ENCODE measurements at regions of chr7 and their contacts with region 1.

Region 1: DNA sequence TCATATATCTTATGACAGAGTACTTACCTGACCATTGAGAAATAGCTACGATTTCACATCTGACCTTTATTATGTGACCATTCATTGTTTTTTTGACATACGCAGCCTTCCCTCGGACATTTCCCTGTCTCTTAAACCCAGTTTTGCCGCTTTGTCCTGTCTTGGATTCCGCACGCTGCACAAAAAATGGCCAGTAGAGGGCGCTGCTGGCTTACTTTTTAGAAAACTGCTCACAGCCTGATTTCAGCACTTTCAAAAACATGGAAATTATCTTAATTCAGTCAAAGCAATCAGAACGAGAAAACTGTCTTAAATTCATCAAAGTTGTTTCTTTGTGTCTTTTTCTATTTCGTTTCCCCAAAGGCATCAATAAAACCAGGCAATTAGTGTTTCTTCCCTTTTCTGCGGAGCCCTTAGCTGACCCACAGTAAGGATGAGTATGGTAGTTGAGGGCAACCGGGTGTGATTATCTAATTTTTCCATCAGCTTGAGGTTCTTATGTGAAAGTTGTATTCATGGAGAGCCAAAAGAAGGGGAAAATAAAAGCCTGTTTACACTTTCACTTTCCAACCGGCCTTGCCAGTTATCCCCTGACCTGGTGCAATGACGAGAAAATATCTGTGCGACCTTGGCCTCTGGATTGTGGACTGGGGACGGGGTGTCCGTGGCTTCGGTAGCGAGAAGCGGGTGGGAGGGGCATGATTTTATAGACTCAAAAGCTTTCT is 144.4 kb downstream of the DYNC1I1 start:
- DNase-seq: peak; percentile 45 to 60
- ATAC-seq: peak; percentile 76 to 94; a peak in 5 of 6 replicates
- H3K4me3 ChIP-seq: no peak overlapping the region
- H3K27ac ChIP-seq: no peak overlapping the region
- H3K4me1 ChIP-seq: no peaks in the 10 kb centered on the region
- CTCF ChIP-seq: peak; percentile 95
- EP300 ChIP-seq: no peak
- POLR2A ChIP-seq: no peak
- RAD21 ChIP-seq: peak; percentile 91

Region 2: GRCh38 chr7:95758187-95758586 is 158.5 kb before region 1 on chr7:
- CTCF ChIA-PET with region 1: no interaction called
- POLR2A ChIA-PET with region 1: no interaction called
- DNase-seq: no peak
- ATAC-seq: no peak
- H3K4me3 ChIP-seq: no peak overlapping the region
- H3K27ac ChIP-seq: no peak overlapping the region
- H3K4me1 ChIP-seq: no peaks in the 10 kb centered on the region
- CTCF ChIP-seq: no peak
- EP300 ChIP-seq: no peak
- POLR2A ChIP-seq: no peak
- RAD21 ChIP-seq: no peak

Region 3: GRCh38 chr7:95899919-95900513 is 16.7 kb before region 1 on chr7:
- CTCF ChIA-PET with region 1: interaction called, 22 read pairs
- POLR2A ChIA-PET with region 1: no interaction called
- DNase-seq: peak in 1 of 2 experiments; percentile 14
- ATAC-seq: peak; percentile 47 to 67; a peak in 4 of 6 replicates
- H3K4me3 ChIP-seq: no peak overlapping the region
- H3K27ac ChIP-seq: no peak overlapping the region
- H3K4me1 ChIP-seq: no peaks in the 10 kb centered on the region
- CTCF ChIP-seq: no peak
- EP300 ChIP-seq: no peak
- POLR2A ChIP-seq: no peak
- RAD21 ChIP-seq: no peak

Region 4: DNA sequence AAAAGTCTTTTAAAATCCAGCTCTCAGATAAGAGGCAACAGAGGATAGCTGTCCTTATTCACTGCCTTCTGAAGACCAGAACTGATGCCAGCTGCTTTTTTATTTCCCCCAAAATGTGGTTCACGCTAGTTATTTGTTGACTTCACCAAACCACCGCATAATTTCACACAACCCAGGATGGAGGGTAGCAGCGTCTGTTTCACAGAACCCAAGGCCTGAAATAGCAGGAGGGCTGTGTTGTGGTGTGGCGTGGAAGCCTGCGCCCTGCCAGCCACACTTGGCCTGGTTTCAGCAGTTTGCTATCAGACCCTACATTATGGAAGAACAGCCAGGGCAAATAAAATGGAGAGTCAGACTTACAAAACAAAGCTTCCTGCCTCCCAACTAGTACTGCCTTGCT is 11.0 kb after region 1 on chr7:
- CTCF ChIA-PET with region 1: interaction called, 26 read pairs
- POLR2A ChIA-PET with region 1: no interaction called
- DNase-seq: no peak
- ATAC-seq: no peak
- H3K4me3 ChIP-seq: no peak overlapping the region
- H3K27ac ChIP-seq: no peak overlapping the region
- H3K4me1 ChIP-seq: no peaks in the 10 kb centered on the region
- CTCF ChIP-seq: no peak
- EP300 ChIP-seq: no peak
- POLR2A ChIP-seq: no peak
- RAD21 ChIP-seq: no peak

Region 5: GRCh38 chr7:96017877-96018276 is 101.1 kb after region 1 on chr7:
- CTCF ChIA-PET with region 1: no interaction called
- POLR2A ChIA-PET with region 1: no interaction called
- DNase-seq: no peak
- ATAC-seq: no peak
- H3K4me3 ChIP-seq: no peak overlapping the region
- H3K27ac ChIP-seq: no peak overlapping the region
- H3K4me1 ChIP-seq: no peaks in the 10 kb centered on the region
- CTCF ChIP-seq: no peak
- EP300 ChIP-seq: no peak
- POLR2A ChIP-seq: no peak
- RAD21 ChIP-seq: no peak

Region 6: DNA sequence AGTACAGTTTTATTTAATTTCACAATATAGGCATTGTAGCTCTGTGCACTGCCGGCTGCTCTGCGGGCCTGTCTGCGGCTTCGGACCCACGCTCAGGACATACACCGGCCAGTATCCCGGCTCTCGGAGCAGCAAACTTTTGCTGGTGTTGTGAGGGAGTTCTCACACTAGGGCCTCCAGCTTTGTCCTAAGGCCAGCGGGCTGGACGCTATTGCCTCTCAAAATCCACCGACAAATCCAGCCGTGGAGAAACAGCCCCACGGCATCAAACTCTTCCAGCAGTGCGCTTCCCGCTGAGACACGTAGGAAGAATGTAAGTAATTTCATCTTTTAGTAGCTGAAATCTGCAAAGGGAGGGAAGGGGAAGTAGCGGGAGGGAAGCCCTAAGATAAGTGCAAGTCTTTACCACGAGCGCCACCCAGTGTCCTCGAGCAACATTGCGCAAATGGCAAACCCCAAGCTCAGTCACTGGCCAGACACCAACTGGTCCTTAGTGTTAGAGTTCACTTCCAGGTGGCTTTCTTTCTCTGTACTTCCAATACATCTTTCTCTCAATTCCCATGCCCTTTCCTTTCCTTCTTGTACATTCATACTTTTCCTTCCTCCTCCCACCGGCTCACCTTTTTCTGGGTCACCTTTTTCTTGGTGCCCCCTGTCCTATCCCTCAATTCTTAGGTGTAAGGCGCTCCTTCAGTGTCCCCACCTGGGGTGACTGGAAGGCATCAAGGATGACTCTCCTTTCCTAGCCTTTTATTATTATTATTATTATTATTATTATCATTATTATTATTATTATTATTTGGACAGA is 1110.9 kb after region 1 on chr7:
- CTCF ChIA-PET with region 1: interaction called, 51 read pairs
- POLR2A ChIA-PET with region 1: no interaction called
- DNase-seq: peak; percentile 55 to 73
- ATAC-seq: peak; percentile 81 to 91
- H3K4me3 ChIP-seq: peak overlapping the region; percentile 24; the same call in 1 of the 3 replicates
- H3K27ac ChIP-seq: no peak overlapping the region
- H3K4me1 ChIP-seq: peaks cover 5% of the 10 kb centered on the region; the same call in 1 of the 3 replicates
- CTCF ChIP-seq: peak; percentile 84
- EP300 ChIP-seq: no peak
- POLR2A ChIP-seq: no peak
- RAD21 ChIP-seq: peak; percentile 94 to 95

Region 7: DNA sequence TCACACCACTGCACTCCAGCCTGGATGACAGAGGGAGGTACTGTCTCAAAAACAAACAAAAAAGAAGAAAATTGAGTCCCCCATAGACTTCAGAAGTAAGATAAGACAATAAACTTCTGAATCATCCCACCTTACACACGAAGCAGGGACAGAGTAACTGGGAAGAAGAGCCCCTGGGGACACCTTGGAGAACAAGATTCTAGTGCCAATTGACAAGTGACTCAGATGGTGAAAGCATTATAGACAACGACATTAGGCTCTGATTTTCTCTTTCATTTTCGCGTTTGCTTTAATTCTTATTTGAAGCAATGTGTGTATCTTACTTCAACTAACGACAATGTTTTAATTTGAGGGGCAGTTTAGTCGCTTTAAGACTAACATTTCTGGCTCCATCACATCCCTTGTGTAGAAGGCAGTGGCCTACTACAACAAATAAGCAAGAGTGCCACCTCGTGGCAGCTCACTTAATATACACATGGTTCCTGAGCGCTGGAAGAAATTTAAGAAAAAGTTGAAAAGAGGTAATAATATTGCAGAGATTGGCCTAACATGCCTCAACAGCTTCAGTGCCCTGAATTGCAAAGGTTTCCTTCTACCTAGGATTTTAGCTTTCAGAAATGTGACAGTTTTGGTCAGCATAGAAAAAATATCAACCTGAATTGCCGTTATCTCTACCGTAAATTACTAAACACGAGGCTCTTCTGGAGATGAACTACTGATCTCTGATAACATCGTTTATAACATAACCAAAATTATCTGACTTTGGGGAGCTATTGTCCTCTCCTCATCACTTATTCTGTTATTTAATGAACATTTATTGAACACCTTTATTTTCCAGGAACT is 1918.8 kb after region 1 on chr7:
- CTCF ChIA-PET with region 1: interaction called, 10 read pairs
- POLR2A ChIA-PET with region 1: no interaction called
- DNase-seq: peak; percentile 21 to 67
- ATAC-seq: peak; percentile 78 to 96; a peak in 5 of 6 replicates
- H3K4me3 ChIP-seq: no peak overlapping the region
- H3K27ac ChIP-seq: no peak overlapping the region
- H3K4me1 ChIP-seq: no peaks in the 10 kb centered on the region
- CTCF ChIP-seq: peak; percentile 86
- EP300 ChIP-seq: no peak
- POLR2A ChIP-seq: no peak
- RAD21 ChIP-seq: peak; percentile 80 to 81

Measured in A549 (cell line).